Prostate gland (tissue), 2 donors: ENCODE measurements at regions of chr3 and their contacts with region 1.

Region 1: DNA sequence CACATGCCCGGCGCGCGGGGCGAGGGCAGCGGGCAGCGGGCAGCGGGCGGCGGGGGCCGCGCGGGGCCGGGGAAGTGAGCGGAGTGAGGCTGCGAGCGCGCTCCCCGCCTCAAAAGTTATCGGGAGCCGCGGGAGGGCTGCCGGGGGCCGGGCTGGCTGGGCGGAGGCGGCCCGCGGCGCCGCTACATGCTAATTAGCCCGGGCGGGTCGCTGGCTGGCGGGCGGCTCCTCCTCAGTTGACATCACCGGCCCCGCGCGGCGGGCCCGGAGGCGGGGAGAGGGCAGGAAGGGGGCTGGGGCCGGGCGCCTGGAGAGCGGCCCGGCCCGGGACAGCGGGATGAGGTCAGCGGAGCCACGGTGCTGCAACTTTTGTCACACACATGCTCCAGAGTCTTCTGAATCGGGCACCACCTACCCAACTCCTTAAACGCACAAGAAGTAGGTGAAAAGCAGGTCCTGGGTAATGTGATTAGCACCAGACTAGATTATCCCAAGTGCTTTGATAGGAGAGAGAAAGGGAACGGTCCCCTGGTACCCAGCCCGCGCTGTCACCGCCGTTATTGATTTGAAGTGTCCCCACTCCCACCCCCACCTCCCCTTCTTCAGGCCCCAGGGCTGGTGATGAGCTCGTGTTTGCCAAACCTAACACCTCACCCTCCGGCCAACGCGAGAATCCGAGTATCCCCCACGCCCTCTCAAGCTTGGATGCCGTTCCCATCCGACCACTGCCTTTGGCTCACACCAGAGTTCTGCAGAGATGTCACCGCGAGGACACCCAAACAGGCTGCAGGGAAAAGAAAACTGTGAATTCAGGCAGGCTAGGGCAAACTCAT is at the start of gene HEG1:
- DNase-seq: peak; percentile 84
- H3K4me3 ChIP-seq: peak within 1 kb of the TSS; percentile 53 to 55
- H3K27ac ChIP-seq: peak within 1 kb of the TSS; percentile 77 to 80
- H3K4me1 ChIP-seq: peaks cover 5% of the 10 kb centered on the region
- H3K27me3 ChIP-seq: no peaks in the 10 kb centered on the region
- CTCF ChIP-seq: peak in 1 of 4 experiments; percentile 2
- POLR2A ChIP-seq: peak; percentile 66
- total RNA-seq, gene HEG1: 27.5 to 130 TPM

Region 2: DNA sequence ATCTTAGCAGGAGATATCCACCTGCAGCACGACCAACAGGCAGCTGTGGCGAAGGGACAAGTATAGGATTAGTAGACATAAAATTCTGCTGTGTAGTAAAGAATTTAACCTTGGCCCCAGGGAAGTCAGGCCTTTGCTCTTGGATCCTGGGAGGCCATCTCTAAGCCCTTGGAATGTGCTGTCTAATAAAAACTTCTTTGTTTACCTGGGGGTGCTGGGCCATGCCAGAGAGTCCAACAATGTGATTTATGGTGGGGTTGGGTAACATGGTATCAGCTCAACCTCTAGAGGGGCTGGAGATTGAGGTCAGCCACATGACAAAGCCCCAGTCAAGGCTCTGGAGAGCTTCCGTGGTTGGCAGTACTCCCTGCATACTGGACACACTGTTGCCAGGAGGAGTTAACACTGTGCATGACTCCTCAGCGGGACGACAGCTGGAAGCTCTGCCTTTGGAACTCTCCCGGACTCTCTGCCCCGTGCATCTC is 52.7 kb before region 1 on chr3:
- intact Hi-C with region 1: loop called (anchors 2 kb)
- DNase-seq: peak; percentile 31
- H3K4me3 ChIP-seq: no peak overlapping the region
- H3K27ac ChIP-seq: peak overlapping the region in 1 of 2 donors; percentile 4
- H3K4me1 ChIP-seq: peaks cover 14% of the 10 kb centered on the region
- H3K27me3 ChIP-seq: no peaks in the 10 kb centered on the region
- CTCF ChIP-seq: no peak
- POLR2A ChIP-seq: no peak

Region 3: DNA sequence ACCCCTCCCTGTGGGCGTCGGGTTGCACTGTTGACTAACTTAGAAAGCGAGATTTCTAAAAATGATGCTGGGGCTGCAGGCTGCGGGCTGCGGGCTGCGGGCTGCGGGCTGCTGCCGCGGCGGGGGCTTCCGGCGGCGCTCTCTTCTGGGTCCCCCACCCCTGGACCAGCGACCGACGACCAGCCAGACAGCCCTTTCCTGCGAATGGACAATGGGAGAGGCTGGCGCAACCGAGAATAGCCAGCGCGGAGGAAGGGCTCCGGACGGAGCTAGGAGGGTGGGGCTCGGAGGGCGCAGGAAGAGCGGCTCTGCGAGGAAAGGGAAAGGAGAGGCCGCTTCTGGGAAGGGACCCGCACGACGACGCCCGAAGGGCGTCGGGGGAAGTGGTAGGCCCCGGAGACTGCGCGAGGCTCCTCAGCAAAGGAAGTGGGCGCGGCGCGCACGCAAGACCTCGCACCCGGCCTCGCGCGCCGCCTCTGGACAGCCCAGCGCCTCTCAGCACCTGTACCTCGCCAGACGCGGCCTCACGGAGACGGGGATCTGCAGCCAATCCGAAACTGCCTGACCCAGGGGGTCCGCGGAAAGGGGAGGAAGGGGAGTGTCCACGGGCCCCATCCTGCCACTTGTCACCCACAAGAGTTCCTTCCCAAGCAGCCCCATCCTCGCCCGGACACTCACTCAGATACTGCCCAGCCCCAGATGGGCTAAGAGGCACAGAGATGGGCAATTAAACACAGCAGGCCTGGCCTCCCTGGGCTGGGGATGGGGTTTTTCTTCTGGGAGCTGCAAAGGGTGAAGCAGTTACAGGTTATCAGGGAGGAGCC is 85.7 kb after region 1 on chr3:
- intact Hi-C with region 1: loop called (anchors 5 kb)
- DNase-seq: peak; percentile 14
- H3K4me3 ChIP-seq: peak overlapping the region; percentile 26 to 29
- H3K27ac ChIP-seq: peak overlapping the region in 1 of 2 donors; percentile 32
- H3K4me1 ChIP-seq: peaks cover 4% of the 10 kb centered on the region
- H3K27me3 ChIP-seq: no peaks in the 10 kb centered on the region
- CTCF ChIP-seq: peak in 2 of 4 experiments; percentile 45 to 53
- POLR2A ChIP-seq: no peak

Region 4: DNA sequence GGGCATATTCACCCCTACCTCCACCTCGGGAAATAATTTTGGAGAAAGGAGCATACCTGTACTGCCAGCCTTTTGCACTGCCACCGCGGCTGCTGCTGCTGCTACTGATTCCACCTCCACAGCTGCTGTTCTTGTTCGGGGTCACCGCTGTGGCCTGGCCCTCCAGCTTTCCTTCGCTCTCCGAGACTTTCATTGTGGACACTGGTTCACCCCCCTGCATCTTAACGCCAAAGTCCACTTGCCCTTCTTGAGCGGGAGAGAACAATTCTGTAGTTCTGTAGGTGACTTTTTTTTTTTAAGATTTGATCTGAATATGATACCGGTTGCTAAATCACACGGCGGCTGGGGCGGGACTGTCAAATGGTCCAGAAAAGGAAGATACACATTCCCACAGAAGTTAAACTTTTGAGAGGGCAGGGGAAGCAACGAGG is 538.5 kb after region 1 on chr3:
- intact Hi-C with region 1: loop called (anchors 10 kb)
- DNase-seq: peak; percentile 10
- H3K4me3 ChIP-seq: peak overlapping the region; percentile 84 to 89
- H3K27ac ChIP-seq: peak overlapping the region; percentile 93 to 94
- H3K4me1 ChIP-seq: no peaks in the 10 kb centered on the region
- H3K27me3 ChIP-seq: no peaks in the 10 kb centered on the region
- CTCF ChIP-seq: no peak
- POLR2A ChIP-seq: no peak